ENCODE measurements at regions of chr16 and their contacts with region 1.

Region 1: GRCh38 chr16:85717393-85718121 is 28.8 kb upstream of the GINS2 start:
- DNase-seq: peak; percentile 79
- ATAC-seq: peak; percentile 71

Region 2: DNA sequence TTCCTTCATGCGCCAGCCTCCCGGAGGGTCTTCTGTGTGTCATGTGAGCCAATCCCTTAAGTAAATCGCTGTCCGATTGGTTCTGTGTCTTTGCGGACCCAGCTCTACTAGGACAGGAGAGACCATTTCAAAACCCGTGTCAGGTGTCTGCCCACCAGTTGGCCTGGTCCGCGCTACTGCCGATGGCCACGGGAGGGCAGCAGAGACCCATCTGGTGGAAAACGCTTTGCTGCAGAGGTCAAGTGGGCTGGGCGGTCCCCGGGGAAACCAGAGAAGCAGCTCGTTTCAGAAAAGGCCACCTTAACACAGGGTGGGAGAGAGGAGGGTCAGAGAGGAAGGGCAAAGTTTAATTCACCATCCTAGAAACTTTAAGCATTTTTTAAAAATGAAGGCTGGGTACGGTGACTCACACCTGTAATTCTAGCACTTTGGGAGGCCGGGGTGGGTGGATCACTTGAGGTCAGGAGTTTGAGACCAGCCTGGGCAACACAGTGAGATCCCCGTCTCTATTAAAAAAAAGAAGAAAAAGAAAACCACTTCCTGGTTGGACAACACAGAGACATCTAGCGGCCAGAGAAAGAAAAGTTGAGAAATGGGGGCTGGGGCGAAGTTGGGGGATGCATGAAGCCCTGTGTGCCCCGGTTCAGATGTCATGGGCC is 602.5 kb before region 1 on chr16:
- intact Hi-C with region 1: loop called (anchors 10 kb)
- DNase-seq: peak; percentile 95
- ATAC-seq: peak; percentile 84

Region 3: DNA sequence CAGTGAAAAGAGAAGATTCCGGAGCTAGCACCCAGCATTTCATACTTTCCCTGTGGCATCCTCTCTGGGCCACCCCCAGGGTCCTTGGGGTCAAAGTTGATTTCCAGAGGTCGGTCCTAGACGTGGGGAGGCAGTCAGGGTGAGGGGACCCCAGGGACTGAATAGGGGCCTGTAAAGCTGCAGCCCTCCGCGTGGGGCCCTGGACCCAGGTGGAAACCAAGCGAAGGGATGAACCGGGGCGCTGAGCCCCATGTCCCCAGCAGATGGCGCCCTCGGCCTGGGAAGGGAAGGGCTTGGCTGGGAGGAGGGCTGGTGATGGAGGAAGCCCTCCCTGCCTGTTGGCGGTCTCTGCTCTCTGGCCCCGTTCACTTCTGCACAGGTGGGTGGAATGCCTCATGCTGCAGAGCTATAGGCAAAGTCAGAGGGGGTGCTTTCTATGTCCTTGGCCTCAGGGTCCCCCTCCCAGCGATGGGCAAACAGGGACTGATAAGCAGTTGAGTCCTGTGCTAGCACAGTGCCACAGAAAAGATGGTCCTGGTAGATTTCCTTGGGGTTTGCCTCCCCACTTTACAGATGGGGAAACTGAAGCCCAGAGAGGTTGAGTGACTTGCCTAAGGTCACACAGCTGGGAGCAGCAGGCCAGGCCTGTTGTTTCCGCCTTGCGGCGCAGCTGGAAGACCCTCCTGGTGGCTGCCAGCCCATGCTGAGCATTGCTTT is 441.9 kb before region 1 on chr16:
- intact Hi-C with region 1: loop called (anchors 10 kb)
- DNase-seq: peak; percentile 89
- ATAC-seq: peak; percentile 73

Region 4: GRCh38 chr16:85639536-85640253 is 77.9 kb before region 1 on chr16:
- intact Hi-C with region 1: no loop called
- DNase-seq: no peak
- ATAC-seq: peak; percentile 19

Region 5: DNA sequence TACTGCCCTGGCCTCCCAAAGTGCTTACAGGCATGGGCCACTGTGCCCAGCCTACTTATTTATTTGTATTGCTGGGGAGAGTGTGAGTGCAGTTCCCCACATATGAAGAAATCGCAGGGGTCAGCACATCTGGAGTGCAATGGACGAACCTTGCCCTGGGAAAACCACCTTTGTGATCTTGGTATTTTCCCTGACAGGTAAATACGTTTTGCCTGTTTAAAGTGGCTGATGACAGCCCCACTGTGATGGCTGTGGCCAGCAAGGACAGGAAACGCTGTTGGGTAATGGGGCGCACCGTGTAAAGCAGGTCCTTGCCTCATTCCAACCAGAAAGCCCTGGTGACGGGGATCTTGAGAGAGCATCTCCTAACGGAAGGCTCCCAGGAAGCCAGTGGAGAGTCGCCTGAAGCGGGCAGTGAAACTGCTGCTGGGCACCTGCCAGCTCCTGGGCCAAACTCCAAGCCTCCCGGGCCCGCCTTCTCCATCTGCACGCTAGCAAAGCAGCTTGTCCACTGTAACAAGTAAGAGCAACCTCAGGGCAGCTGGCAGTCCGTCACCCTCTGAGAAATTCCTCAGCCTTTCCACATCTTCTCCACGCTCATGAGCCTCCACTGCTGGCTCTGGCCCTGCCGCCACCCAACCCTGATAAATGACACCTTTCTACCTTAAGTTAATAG is 64.3 kb after region 1 on chr16:
- intact Hi-C with region 1: no loop called
- DNase-seq: no peak
- ATAC-seq: peak; percentile 27

Measured in sciatic nerve (tissue), 2 donors.